ENCODE measurements at regions of chr1 and their contacts with region 1.

Region 1: GRCh38 chr1:116239620-116240310 is 128.6 kb downstream of the MAB21L3 start:
- DNase-seq: no peak
- ATAC-seq: no peak

Region 2: GRCh38 chr1:114511032-114511785 is 1728.6 kb before region 1 on chr1 and contains the start of gene TRIM33:
- intact Hi-C with region 1: no loop called
- DNase-seq: peak; percentile 94
- ATAC-seq: peak; percentile 98
- total RNA-seq, gene TRIM33: 41.4 TPM

Region 3: DNA sequence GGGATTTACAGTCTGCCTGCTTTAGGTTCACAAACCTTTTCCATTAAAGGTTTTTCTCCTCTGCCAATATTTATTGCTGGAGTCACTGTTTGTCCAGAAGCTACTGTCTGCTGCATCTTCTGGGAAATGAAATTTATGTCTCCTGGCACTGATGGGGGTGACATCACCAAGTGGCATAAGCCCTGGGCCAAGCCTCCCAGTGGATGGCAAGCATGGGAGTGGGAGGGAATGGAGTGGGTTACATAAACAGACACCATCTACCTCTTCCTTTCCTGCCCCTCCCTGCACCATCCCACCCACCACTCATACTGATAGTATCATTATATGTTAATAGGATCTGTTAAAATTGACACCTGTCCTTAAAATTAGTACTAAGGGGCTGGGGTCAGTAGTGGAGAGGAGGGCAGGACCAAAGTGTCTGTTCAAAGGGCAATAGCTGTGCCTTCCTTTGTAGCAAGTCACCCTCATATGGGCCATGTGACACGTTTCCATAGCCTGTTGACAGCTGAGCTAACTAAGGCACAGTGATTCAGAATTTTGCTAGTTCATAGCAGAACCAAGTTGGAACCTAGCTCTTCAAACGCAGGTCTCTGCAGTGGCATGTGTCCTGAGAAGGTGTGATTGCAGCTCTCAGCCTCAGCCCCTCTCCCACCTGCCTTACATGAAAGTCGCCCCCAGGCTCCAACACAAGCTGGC is 57.6 kb before region 1 on chr1:
- intact Hi-C with region 1: no loop called
- DNase-seq: no peak
- ATAC-seq: no peak

Region 4: DNA sequence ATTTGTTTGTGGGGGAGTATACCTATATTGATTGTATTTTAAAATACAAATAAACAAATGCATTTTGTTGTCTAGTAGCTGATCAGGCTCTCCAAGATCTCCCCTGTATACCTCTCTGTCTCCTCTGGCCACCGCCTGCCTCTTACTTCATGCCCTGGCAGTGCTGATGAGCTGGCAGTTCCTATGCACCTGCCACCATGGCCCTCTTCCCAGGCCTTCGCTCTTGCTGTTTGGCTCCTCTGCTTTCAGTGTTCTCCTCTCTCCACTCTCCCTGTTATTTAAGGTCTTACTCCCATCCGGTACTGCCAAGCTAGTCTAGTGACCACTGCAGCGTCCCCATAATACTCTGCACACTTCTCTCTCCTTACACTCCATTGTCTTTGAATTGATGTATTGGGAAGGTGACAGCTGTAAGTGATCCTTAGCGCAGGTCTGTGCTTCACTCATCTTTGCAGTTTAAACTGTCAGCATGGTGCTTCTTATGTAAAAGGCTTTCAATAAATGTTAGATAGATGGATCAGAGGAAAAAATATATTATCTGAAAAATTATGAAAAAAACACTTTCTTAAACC is 45.1 kb after region 1 on chr1:
- intact Hi-C with region 1: loop called (anchors 1 kb)
- DNase-seq: no peak
- ATAC-seq: no peak

Region 5: GRCh38 chr1:116556289-116557006 is 316.7 kb after region 1 on chr1:
- intact Hi-C with region 1: no loop called
- DNase-seq: no peak
- ATAC-seq: peak; percentile 46

Measured in sciatic nerve (tissue), 2 donors.